Heart left ventricle (tissue), 16 donors: ENCODE measurements at regions of chr7 and their contacts with region 1.

Region 1: DNA sequence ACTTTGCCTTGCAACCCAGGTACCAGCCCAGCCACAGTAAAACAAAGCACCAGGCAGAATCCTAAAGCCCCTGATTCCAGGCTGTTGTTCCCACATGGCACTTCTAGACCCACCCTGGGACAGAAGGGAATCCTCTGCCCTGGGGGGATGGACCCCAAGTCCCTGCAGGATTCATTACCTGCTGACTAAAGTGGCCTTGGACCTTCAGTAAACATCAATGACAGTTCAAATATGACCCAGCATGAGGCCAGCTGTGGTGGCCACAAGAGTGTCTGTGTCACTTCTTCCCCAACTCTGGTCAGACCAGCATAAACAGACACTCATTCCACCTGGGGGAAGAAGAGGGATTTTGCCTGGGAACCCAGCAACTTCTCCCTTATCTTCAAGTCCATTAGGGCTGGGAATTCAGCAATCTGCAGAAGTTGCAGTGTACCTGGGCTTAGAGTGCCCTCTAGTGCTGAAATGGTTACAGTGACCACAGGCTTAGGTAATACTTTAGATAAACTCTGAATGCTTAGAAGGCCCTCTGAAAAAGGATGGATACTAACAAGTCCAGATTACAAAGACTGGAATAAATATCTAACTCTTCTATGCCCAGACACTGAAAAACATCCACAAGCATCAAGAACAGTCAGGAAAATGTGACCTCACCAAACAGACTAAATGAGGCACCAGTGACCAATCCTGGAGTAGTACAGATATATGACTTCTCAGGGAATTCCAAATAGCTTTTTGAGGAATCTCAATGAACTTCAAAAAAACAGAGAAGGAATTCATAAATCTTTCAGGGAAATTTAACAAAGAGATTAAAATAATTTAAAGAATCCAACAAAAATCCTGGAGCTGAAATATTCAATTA is 108.5 kb upstream of the TMEM168 start:
- DNase-seq: peak in 1 of 5 donors; percentile 40
- ATAC-seq: peak; percentile 41 to 86 (median 76)
- H3K4me3 ChIP-seq: no peak overlapping the region
- H3K27ac ChIP-seq: no peak overlapping the region
- H3K4me1 ChIP-seq: peaks cover 0 to 32% (median 9%) of the 10 kb centered on the region in 12 donors
- H3K27me3 ChIP-seq: no peaks in the 10 kb centered on the region
- CTCF ChIP-seq: peak; percentile 55 to 80 (median 65)
- POLR2A ChIP-seq: no peak

Region 2: GRCh38 chr7:112495810-112496462 is 402.7 kb before region 1 on chr7:
- intact Hi-C with region 1: loop called in 1 of 10 experiments (anchors 5 kb)
- DNase-seq: peak in 2 of 5 donors; percentile 46 to 55
- ATAC-seq: peak; percentile 52 to 90 (median 89)
- H3K4me3 ChIP-seq: no peak overlapping the region
- H3K27ac ChIP-seq: peak overlapping the region in 1 of 12 donors; percentile 30
- H3K4me1 ChIP-seq: no peaks in the 10 kb centered on the region
- H3K27me3 ChIP-seq: no peaks in the 10 kb centered on the region
- CTCF ChIP-seq: peak; percentile 35 to 70 (median 62)
- POLR2A ChIP-seq: no peak

Region 3: GRCh38 chr7:112566442-112567324 is 332.0 kb before region 1 on chr7:
- intact Hi-C with region 1: loop called in 2 of 10 experiments (anchors 5 kb)
- DNase-seq: no peak
- ATAC-seq: peak; percentile 52 to 87 (median 66)
- H3K4me3 ChIP-seq: peak overlapping the region in 4 of 12 donors; percentile 0 to 13 (median 2)
- H3K27ac ChIP-seq: peak overlapping the region; percentile 6 to 75 (median 51)
- H3K4me1 ChIP-seq: peaks cover 0 to 7% (median 2%) of the 10 kb centered on the region in 12 donors
- H3K27me3 ChIP-seq: no peaks in the 10 kb centered on the region
- CTCF ChIP-seq: no peak
- POLR2A ChIP-seq: no peak

Region 4: DNA sequence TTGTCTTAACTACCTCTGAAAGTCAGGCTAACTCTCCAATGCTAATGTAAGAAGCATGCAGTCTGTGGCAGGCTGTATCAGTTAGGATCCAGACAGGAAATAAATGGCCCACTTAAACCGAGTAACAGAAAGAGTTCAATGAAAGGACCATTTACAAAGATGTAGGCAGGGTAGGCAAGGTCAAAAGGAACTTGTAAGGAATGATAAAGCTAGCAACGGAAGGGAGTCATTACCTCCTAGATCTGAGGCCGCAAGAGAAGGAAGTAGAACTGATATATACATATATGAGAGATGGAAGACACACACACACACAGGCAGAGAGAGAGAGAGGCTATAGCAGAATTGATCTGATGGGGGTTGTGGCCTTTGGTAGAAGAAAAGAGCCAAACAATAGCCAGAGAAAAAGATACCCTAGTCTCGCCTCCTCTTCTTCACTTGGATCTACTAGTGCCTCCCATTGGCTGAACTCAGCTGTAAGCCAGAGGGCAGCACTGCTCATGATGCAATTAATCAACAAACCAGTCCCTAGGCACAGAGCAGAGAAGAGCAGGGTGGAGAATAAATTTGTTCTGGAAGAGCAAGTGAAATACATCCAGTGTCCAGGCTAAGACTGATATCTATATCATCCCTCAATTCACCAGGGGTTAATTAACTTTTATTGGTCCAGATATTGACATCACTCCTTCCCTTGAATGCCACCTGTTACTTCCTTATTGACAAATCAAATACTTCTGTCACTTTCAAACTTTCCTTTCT is 326.6 kb before region 1 on chr7:
- intact Hi-C with region 1: loop called in 2 of 10 experiments (anchors 5 kb)
- DNase-seq: no peak
- ATAC-seq: peak in 3 of 4 donors; percentile 43 to 60 (median 52)
- H3K4me3 ChIP-seq: no peak overlapping the region
- H3K27ac ChIP-seq: peak overlapping the region in 9 of 12 donors; percentile 5 to 77 (median 67)
- H3K4me1 ChIP-seq: peaks cover 0 to 33% (median 13%) of the 10 kb centered on the region in 12 donors
- H3K27me3 ChIP-seq: no peaks in the 10 kb centered on the region
- CTCF ChIP-seq: peak in 3 of 12 donors; percentile 24 to 32 (median 30)
- POLR2A ChIP-seq: no peak

Region 5: GRCh38 chr7:112665726-112666125 is 232.9 kb before region 1 on chr7:
- intact Hi-C with region 1: loop called in 3 of 10 experiments (anchors 10 kb)
- DNase-seq: no peak
- ATAC-seq: peak in 3 of 4 donors; percentile 52 to 73 (median 59)
- H3K4me3 ChIP-seq: no peak overlapping the region
- H3K27ac ChIP-seq: no peak overlapping the region
- H3K4me1 ChIP-seq: no peaks in the 10 kb centered on the region
- H3K27me3 ChIP-seq: no peaks in the 10 kb centered on the region
- CTCF ChIP-seq: peak in 10 of 12 donors; percentile 5 to 44 (median 36)
- POLR2A ChIP-seq: no peak